ENCODE measurements at regions of chr4 and their contacts with region 1.

Region 1: DNA sequence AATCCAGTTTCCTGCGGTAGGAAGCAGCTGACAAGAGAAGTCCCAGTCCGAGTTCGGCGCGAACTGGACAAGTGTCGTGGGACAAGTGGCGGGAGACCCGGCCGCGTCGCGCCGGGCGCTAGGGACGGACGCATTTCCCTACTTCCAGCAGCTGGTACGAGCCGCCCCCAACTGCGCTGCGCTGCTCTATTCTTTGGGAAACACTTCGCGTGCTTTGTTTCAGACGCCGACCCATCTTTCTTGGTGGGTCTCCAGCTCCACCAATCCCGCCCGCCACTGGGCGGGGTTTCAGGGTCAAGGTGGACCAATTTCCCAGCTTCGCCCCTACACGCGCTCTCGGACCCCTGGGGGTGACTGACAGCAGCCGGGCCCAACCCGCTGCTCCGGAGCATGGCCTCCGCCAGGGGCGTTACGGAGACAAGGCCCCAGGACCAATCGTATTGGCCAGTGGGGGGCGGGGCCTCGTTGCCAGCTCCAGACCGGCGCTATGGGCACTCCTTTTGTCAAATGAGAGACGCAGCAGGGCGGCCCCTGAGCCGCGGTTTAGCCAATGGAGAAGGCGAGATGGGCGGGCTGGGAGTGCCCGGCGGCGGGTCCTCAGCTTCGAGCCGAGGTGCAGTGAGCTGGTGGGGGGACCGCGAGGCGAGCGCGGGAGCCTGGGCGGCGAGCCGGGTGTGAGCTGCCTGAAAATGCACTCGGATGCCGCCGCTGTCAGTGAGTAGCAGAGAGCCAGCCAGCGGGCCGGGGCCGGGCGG is at the start of gene DCUN1D4:
- DNase-seq: peak; percentile 97
- ATAC-seq: peak; percentile 90
- H3K4me3 Mint-ChIP-seq: peak within 1 kb of the TSS; percentile 95
- H3K27ac Mint-ChIP-seq: peak within 1 kb of the TSS; percentile 90
- H3K4me1 Mint-ChIP-seq: peaks cover 15% of the 10 kb centered on the region
- H3K27me3 Mint-ChIP-seq: no peaks in the 10 kb centered on the region
- CTCF ChIP-seq: no peak
- total RNA-seq, gene DCUN1D4: 23.0 and 23.9 TPM in 2 replicates

Region 2: GRCh38 chr4:51895813-51896408 is 53.2 kb after region 1 on chr4:
- CTCF ChIA-PET with region 1: interaction called, 4 read pairs
- POLR2A ChIA-PET with region 1: no interaction called
- intact Hi-C with region 1: loop called (anchors 2 kb)
- DNase-seq: no peak
- ATAC-seq: peak; percentile 95
- H3K4me3 Mint-ChIP-seq: no peak overlapping the region
- H3K27ac Mint-ChIP-seq: no peak overlapping the region
- H3K4me1 Mint-ChIP-seq: peaks cover 2% of the 10 kb centered on the region
- H3K27me3 Mint-ChIP-seq: no peaks in the 10 kb centered on the region
- CTCF ChIP-seq: peak; percentile 39

Region 3: DNA sequence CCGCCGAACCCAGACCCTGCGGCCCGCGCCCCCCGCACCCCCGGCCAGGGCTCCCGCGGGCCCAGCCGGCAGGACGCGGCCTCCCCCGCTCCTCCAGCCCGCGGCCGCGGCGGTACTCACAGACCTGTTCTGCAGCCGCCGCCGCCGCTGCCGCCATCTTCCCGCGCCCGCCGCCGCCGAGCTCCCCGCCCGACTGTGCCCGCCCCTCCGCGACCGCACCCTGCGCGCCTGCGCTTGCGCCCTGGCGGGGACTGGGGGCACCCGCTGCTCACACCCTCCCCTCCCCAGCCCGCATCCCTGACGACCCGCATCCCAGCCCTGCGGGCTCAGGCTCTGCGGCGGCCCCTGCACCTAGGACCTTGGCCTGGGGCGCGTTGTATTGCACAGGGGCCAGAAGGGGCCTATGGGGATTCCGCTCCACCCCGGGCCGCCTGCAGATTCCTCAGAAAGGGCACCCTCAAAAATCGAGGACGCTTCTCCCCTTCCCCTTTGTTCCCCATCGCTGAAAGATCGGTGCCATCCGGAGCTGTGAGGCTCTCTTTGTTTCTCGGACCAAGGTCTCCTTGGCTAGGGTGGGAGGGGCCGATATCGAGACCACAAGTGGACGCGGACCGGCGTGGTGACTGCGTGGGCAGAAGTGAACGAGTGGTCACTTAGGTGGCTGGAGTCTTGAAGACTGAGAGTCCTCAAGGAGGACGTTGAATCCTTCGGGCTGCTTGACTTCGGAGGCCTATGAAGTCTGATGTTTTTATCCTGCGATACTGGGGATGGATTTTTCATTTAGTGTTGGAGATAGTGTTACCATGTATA is 195.6 kb after region 1 on chr4 and contains the start of gene SGCB:
- CTCF ChIA-PET with region 1: no interaction called
- POLR2A ChIA-PET with region 1: interaction called, 14 read pairs
- intact Hi-C with region 1: loop called (anchors 1 kb)
- DNase-seq: peak; percentile 75
- ATAC-seq: peak; percentile 95
- H3K4me3 Mint-ChIP-seq: peak within 1 kb of the TSS; percentile 85
- H3K27ac Mint-ChIP-seq: peak within 1 kb of the TSS; percentile 64
- H3K4me1 Mint-ChIP-seq: peaks cover 24% of the 10 kb centered on the region
- H3K27me3 Mint-ChIP-seq: peaks cover 25% of the 10 kb centered on the region
- CTCF ChIP-seq: no peak
- total RNA-seq, gene SGCB: 6.5 and 10.8 TPM in 2 replicates

Region 4: GRCh38 chr4:52712172-52712990 is 869.6 kb after region 1 on chr4:
- CTCF ChIA-PET with region 1: no interaction called
- POLR2A ChIA-PET with region 1: interaction called, 7 read pairs
- intact Hi-C with region 1: loop called (anchors 2 kb)
- DNase-seq: peak; percentile 92
- ATAC-seq: peak; percentile 94
- H3K4me3 Mint-ChIP-seq: peak overlapping the region; percentile 92
- H3K27ac Mint-ChIP-seq: peak overlapping the region; percentile 95
- H3K4me1 Mint-ChIP-seq: peaks cover 64% of the 10 kb centered on the region
- H3K27me3 Mint-ChIP-seq: no peaks in the 10 kb centered on the region
- CTCF ChIP-seq: no peak

Region 5: DNA sequence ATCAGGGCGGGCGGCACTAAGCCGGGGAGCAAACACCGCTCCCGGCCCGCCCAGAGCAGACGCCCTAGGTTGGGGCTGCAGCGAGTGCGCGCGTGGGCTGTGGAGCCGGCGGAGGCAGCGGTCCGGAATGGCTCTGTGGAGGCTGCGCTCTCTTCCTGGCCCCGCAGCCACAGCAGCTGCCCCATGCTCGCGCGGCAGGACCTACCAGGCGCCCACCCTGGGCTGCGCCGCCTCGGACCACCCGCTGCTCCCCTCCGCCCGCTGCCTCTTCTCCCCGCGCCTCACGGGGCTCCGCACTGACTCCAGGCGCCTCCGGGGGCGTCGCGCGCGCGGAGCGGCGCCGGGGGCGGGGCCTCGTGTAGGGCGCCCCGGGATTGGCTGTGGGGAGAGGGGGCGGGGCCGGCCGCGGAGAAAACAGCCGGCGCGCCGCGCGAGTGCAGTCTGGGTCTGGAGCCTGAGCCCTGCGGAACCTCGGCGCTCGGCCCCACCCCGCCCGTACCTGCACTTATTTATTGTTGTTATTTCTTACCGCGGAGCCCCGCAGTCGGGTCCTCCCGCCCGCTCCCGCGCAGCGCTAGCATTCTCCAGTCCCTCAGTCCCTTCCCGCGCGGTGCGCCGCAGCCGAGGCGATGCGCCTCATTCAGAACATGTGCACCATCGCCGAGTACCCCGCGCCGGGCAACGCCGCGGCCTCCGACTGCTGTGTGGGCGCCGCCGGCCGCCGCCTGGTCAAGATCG is 1019.3 kb after region 1 on chr4 and contains the start of gene RASL11B:
- CTCF ChIA-PET with region 1: no interaction called
- POLR2A ChIA-PET with region 1: no interaction called
- intact Hi-C with region 1: loop called (anchors 5 kb)
- DNase-seq: peak; percentile 91
- ATAC-seq: peak; percentile 99
- H3K4me3 Mint-ChIP-seq: peak within 1 kb of the TSS; percentile 82
- H3K27ac Mint-ChIP-seq: no peak within 1 kb of the TSS
- H3K4me1 Mint-ChIP-seq: peaks cover 16% of the 10 kb centered on the region
- H3K27me3 Mint-ChIP-seq: peaks cover 38% of the 10 kb centered on the region
- CTCF ChIP-seq: no peak
- total RNA-seq, gene RASL11B: 0.69 TPM in 1 of 2 replicates, not detected in the other